ENCODE measurements at regions of chr1 and their contacts with region 1.

Region 1: GRCh38 chr1:22365331-22366295 is 86.0 kb upstream of the ZBTB40 start:
- DNase-seq: no peak
- H3K4me3 ChIP-seq: no peak overlapping the region
- H3K27ac ChIP-seq: no peak overlapping the region
- H3K4me1 ChIP-seq: no peaks in the 10 kb centered on the region
- H3K27me3 ChIP-seq: peaks cover 36% of the 10 kb centered on the region
- CTCF ChIP-seq: no peak

Region 2: GRCh38 chr1:22471078-22471477 is 105.5 kb after region 1 on chr1:
- CTCF ChIA-PET with region 1: no interaction called
- POLR2A ChIA-PET with region 1: interaction called, 26 read pairs
- intact Hi-C with region 1: no loop called
- DNase-seq: no peak
- H3K4me3 ChIP-seq: no peak overlapping the region
- H3K27ac ChIP-seq: no peak overlapping the region
- H3K4me1 ChIP-seq: no peaks in the 10 kb centered on the region
- H3K27me3 ChIP-seq: no peaks in the 10 kb centered on the region
- CTCF ChIP-seq: no peak

Region 3: GRCh38 chr1:23249787-23250454 is 884.3 kb after region 1 on chr1:
- CTCF ChIA-PET with region 1: no interaction called
- POLR2A ChIA-PET with region 1: no interaction called
- intact Hi-C with region 1: no loop called
- DNase-seq: no peak
- H3K4me3 ChIP-seq: no peak overlapping the region
- H3K27ac ChIP-seq: no peak overlapping the region
- H3K4me1 ChIP-seq: no peaks in the 10 kb centered on the region
- H3K27me3 ChIP-seq: no peaks in the 10 kb centered on the region
- CTCF ChIP-seq: no peak